Cardiac septum (tissue), 1 donor: ENCODE measurements at regions of chr2 and their contacts with region 1.

Region 1: GRCh38 chr2:224284134-224284946 is 117.6 kb downstream of the FAM124B start:
- DNase-seq: no peak

Region 2: GRCh38 chr2:223970343-223971128 is 313.8 kb before region 1 on chr2:
- intact Hi-C with region 1: loop called (anchors 2 kb)
- DNase-seq: no peak

Region 3: GRCh38 chr2:223993621-223994232 is 290.6 kb before region 1 on chr2:
- intact Hi-C with region 1: loop called (anchors 1 kb)
- DNase-seq: no peak

Region 4: DNA sequence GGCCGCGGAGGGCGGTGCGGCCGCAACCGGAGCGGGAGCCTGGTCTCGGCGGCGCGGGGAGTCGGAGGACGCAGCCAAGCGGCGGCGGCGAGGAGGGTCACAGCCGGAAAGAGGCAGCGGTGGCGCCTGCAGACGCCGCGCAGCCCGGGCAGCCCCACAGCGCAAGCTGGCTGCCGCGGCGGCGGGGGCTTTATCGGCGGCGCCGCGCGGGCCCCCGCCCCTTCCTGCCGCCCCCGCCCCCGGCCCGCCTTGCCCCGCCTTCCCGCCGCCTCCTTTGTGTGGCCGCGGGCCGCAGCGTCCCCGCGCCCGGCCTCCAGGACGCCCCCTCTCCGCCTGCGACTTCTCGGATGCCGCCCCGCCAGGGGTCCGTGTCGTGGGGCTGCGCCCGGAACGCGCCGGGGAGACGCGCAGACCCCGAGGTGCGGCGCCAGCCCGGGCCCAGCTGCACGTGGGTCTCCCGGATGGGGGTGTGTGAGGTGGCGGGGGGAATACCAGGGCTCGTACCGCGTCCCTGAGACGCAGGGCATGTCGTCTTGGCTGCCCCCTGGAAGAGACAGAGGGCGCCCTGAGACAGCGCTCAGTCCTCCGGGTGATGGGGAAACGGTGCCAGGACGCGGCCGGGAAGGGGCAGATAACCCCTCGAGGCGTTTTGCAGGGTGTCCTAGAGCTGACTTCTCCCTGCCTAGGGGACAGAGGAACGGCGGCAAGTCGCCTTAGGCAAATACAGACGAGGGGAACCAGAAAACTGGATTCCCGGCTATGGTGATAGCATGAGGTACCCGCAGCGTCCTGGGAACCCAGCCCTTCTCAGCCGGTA is 245.0 kb before region 1 on chr2 and contains the start of gene SERPINE2:
- intact Hi-C with region 1: loop called (anchors 5 kb)
- DNase-seq: peak; percentile 78
- total RNA-seq, gene SERPINE2: 91.5 TPM